K562 (cell line): ENCODE measurements at regions of chr3 and their contacts with region 1.

Region 1: DNA sequence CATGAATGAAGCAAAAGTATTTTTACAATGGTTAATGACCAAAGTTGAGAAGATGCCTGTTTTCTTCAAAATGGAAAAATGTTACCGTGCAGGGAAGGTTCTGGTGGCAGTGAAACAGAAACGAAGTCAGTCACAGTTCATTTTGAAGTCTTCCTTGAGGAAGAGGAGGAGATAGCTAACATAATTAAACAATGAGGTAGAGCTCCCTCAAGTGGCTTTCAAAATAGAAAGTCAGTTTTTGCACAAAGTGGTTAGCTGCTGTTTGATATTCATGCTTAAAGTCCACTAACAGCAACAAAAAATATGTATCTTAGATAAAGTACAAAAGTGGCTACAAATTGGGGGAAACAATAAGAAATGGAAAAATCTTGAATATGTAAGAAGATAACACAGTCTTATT is 87.3 kb downstream of the TFG start:
- DNase-seq: peak in 1 of 4 experiments; percentile 11
- ATAC-seq: peak; percentile 61; the same call in 2 of the 3 replicates
- H3K4me3 ChIP-seq: no peak overlapping the region
- H3K27ac ChIP-seq: no peak overlapping the region
- H3K4me1 ChIP-seq: no peaks in the 10 kb centered on the region
- H3K27me3 ChIP-seq: no peaks in the 10 kb centered on the region
- CTCF ChIP-seq: peak in 2 of 3 experiments; percentile 42 to 50; a peak in 3 of 6 replicates
- EP300 ChIP-seq: no peak
- POLR2A ChIP-seq: no peak
- RAD21 ChIP-seq: peak; percentile 17 to 66; a peak in 2 of 4 replicates

Region 2: GRCh38 chr3:99925584-99926212 is 870.9 kb before region 1 on chr3:
- CTCF ChIA-PET with region 1: no interaction called
- POLR2A ChIA-PET with region 1: no interaction called
- in situ Hi-C with region 1: no loop called
- intact Hi-C with region 1: no loop called
- DNase-seq: no peak
- ATAC-seq: no peak
- H3K4me3 ChIP-seq: no peak overlapping the region
- H3K27ac ChIP-seq: no peak overlapping the region
- H3K4me1 ChIP-seq: peaks cover 0 to 8% of the 10 kb centered on the region in 2 experiments; a peak in 3 of 5 replicates
- H3K27me3 ChIP-seq: no peaks in the 10 kb centered on the region
- CTCF ChIP-seq: no peak
- EP300 ChIP-seq: no peak
- POLR2A ChIP-seq: no peak
- RAD21 ChIP-seq: no peak

Region 3: DNA sequence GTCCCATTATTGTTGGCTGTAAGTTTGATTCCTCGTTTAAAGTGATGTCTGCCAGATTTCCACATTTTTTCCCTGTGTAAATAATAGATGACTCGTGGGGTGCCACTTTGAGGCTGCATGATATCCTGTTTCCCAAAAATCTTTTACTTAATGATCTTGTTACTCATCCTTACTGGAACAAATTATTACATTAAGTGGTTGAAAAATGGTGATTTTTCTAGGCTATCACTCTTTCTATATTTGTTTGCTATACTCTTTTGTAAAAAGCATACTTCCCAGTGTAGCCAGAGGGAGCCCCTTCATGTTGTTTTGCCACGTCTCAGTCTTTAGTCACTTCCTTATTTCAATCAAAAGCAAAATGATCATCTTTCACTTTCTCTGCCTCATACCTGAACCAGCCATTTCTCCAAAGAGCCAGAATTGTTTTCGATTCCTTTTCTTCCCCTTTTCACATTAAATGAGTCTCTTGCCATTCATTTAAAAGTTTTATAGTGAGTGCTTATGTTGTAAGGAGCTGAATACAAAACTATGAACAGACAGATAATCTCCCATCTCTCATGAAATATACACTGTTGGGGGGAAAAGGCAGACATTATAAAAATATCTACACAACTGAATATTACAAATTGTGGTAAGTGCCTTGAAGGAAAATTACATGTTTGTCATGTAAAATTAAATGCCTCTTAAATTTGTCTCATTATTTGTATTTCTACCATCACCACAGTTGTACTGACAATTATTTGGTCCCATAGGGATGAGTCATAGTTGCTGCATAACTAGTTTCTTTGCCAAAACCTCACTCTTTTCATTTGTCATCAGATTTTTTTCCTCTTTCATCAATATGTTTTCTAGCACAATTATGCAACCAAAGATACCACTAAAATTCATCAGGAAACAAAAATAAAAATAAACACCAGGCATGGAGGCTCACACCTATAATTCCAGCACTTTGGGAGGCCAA is 145.6 kb before region 1 on chr3:
- CTCF ChIA-PET with region 1: no interaction called
- POLR2A ChIA-PET with region 1: no interaction called
- in situ Hi-C with region 1: no loop called
- intact Hi-C with region 1: loop called (anchors 10 kb)
- DNase-seq: peak in 1 of 4 experiments; percentile 13
- ATAC-seq: peak; percentile 73
- H3K4me3 ChIP-seq: no peak overlapping the region
- H3K27ac ChIP-seq: no peak overlapping the region; the same call in 2 of the 3 replicates
- H3K4me1 ChIP-seq: peaks cover 0 to 3% of the 10 kb centered on the region in 2 experiments; a peak in 2 of 5 replicates
- H3K27me3 ChIP-seq: no peaks in the 10 kb centered on the region
- CTCF ChIP-seq: peak in 1 of 3 experiments; percentile 47; a peak in 2 of 6 replicates
- EP300 ChIP-seq: no peak
- POLR2A ChIP-seq: no peak
- RAD21 ChIP-seq: peak; percentile 31 to 57

Region 4: DNA sequence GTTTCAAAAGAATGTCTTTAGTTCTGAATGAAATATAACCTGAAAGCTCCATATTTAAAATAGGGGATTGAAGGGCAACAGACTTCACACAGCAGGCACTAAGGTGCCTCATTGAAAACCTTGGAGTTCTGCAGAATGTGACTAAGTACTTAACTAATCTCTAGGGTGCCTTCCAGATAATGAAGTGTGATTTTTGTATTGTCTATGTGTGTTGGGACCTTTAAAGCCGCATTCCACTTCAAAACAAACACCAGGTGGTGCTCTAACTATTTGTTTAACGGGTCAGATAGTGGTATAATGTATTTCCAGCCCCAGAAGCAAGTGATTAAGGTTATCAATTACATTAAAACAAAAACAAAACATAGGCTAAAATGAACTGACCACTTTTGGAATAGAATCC is 59.2 kb before region 1 on chr3:
- CTCF ChIA-PET with region 1: no interaction called
- POLR2A ChIA-PET with region 1: no interaction called
- in situ Hi-C with region 1: no loop called
- intact Hi-C with region 1: loop called (anchors 5 kb)
- DNase-seq: peak; percentile 13 to 19 (median 14)
- ATAC-seq: peak; percentile 76
- H3K4me3 ChIP-seq: no peak overlapping the region
- H3K27ac ChIP-seq: no peak overlapping the region
- H3K4me1 ChIP-seq: peaks cover 0 to 5% of the 10 kb centered on the region in 2 experiments; a peak in 2 of 5 replicates
- H3K27me3 ChIP-seq: no peaks in the 10 kb centered on the region
- CTCF ChIP-seq: peak in 2 of 3 experiments; percentile 32 to 36; a peak in 2 of 6 replicates
- EP300 ChIP-seq: no peak
- POLR2A ChIP-seq: no peak
- RAD21 ChIP-seq: peak; percentile 24 to 56; a peak in 3 of 4 replicates

Region 5: DNA sequence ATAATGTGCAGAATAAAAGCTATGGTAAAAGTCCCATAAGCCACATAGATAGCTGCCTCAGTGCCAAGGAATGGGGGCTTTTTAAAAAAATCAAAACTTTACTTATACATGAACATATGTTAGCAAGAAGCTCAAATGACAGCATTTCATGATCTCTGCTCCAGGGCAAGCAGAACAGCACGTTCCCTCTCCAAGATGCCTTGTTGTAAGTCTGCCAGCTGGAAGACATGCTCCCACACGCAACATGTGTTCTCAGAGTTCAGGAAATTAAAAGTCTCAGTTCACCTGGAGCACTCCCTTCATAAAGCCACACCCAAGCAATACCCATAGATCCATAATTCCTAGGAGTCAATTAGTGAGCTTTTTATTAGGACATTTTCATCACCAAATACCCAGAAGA is 144.5 kb after region 1 on chr3:
- CTCF ChIA-PET with region 1: no interaction called
- POLR2A ChIA-PET with region 1: no interaction called
- in situ Hi-C with region 1: no loop called
- intact Hi-C with region 1: no loop called
- DNase-seq: no peak
- ATAC-seq: no peak
- H3K4me3 ChIP-seq: no peak overlapping the region
- H3K27ac ChIP-seq: no peak overlapping the region
- H3K4me1 ChIP-seq: no peaks in the 10 kb centered on the region
- H3K27me3 ChIP-seq: no peaks in the 10 kb centered on the region
- CTCF ChIP-seq: no peak
- EP300 ChIP-seq: no peak
- POLR2A ChIP-seq: no peak
- RAD21 ChIP-seq: no peak

Region 6: GRCh38 chr3:101809178-101810021 is 1012.8 kb after region 1 on chr3:
- CTCF ChIA-PET with region 1: no interaction called
- POLR2A ChIA-PET with region 1: no interaction called
- in situ Hi-C with region 1: no loop called
- intact Hi-C with region 1: no loop called
- DNase-seq: peak; percentile 21 to 44 (median 32)
- ATAC-seq: peak; percentile 61; the same call in 2 of the 3 replicates
- H3K4me3 ChIP-seq: no peak overlapping the region
- H3K27ac ChIP-seq: no peak overlapping the region
- H3K4me1 ChIP-seq: no peaks in the 10 kb centered on the region
- H3K27me3 ChIP-seq: no peaks in the 10 kb centered on the region
- CTCF ChIP-seq: peak; percentile 34 to 68 (median 54); a peak in 5 of 6 replicates
- EP300 ChIP-seq: no peak
- POLR2A ChIP-seq: no peak
- RAD21 ChIP-seq: peak; percentile 78 to 80